Naive thymus-derived CD4-positive, alpha-beta T cell (primary cell): ENCODE measurements at regions of chr2 and their contacts with region 1.

Region 1: DNA sequence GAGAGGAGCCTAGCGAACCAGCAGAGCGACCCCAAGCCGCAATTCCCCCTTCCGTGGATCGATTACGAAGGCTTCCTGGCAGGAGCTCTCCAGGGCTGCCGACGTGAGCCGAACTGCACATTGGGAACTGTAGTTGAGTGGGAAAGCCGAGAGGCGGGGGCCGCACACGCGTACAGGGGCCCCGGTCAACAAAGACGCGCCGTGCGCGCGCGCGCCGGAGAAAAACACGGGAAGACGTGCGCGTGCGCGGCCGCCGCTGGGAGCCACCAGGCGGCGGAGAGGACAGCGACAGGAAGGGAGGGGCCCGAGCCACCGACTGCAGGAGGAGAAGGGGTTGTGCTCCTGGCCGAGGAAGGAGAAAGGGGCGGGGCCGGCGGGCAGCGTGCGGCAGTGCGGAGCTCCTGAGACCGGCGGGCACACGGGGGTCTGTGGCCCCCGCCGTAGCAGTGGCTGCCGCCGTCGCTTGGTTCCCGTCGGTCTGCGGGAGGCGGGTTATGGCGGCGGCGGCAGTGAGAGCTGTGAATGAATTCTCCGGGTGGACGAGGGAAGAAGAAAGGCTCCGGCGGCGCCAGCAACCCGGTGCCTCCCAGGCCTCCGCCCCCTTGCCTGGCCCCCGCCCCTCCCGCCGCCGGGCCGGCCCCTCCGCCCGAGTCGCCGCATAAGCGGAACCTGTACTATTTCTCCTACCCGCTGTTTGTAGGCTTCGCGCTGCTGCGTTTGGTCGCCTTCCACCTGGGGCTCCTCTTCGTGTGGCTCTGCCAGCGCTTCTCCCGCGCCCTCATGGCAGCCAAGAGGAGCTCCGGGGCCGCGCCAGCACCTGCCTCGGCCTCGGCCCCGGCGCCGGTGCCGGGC is at the start of gene SPAST:
- DNase-seq: peak; percentile 92 to 97 (median 95)
- ATAC-seq: peak; percentile 93
- H3K4me3 ChIP-seq: peak within 1 kb of the TSS; percentile 99
- H3K4me3 Mint-ChIP-seq: peak within 1 kb of the TSS; percentile 91 to 100 (median 98)
- H3K27ac ChIP-seq: peak within 1 kb of the TSS; percentile 88
- H3K27ac Mint-ChIP-seq: peak within 1 kb of the TSS; percentile 88 to 97 (median 92)
- H3K4me1 ChIP-seq: peaks cover 5 to 15% of the 10 kb centered on the region in 2 donors
- H3K4me1 Mint-ChIP-seq: peaks cover 22 to 46% (median 37%) of the 10 kb centered on the region in 7 donors
- H3K27me3 ChIP-seq: no peaks in the 10 kb centered on the region
- H3K27me3 Mint-ChIP-seq: peaks cover 0 to 1% (median 0%) of the 10 kb centered on the region in 5 donors
- total RNA-seq, gene SPAST: 16.3 to 21.0 (median 20.3) TPM

Region 2: GRCh38 chr2:32039447-32040219 is 23.9 kb before region 1 on chr2 and contains the start of gene DPY30:
- CTCF ChIA-PET with region 1: interaction called, 5 read pairs
- POLR2A ChIA-PET with region 1: interaction called, 82 read pairs
- intact Hi-C with region 1: loop called (anchors 1 kb)
- DNase-seq: peak; percentile 86 to 94 (median 90)
- ATAC-seq: peak; percentile 98
- H3K4me3 ChIP-seq: peak within 1 kb of the TSS; percentile 64
- H3K4me3 Mint-ChIP-seq: peak within 1 kb of the TSS; percentile 88 to 98 (median 93)
- H3K27ac ChIP-seq: peak within 1 kb of the TSS; percentile 78
- H3K27ac Mint-ChIP-seq: peak within 1 kb of the TSS; percentile 91 to 99 (median 96)
- H3K4me1 ChIP-seq: peaks cover 5 to 6% of the 10 kb centered on the region in 2 donors
- H3K4me1 Mint-ChIP-seq: peaks cover 0 to 32% (median 24%) of the 10 kb centered on the region in 7 donors
- H3K27me3 ChIP-seq: no peaks in the 10 kb centered on the region
- H3K27me3 Mint-ChIP-seq: no peaks in the 10 kb centered on the region
- total RNA-seq, gene DPY30: 21.4 to 61.9 (median 45.6) TPM

Region 3: GRCh38 chr2:32135409-32135808 is 71.9 kb after region 1 on chr2:
- CTCF ChIA-PET with region 1: no interaction called
- POLR2A ChIA-PET with region 1: no interaction called
- intact Hi-C with region 1: loop called (anchors 1 to 5 kb)
- DNase-seq: peak in 5 of 9 donors; percentile 4 to 31 (median 17)
- ATAC-seq: no peak
- H3K4me3 ChIP-seq: no peak overlapping the region
- H3K4me3 Mint-ChIP-seq: no peak overlapping the region
- H3K27ac ChIP-seq: no peak overlapping the region
- H3K27ac Mint-ChIP-seq: no peak overlapping the region
- H3K4me1 ChIP-seq: no peaks in the 10 kb centered on the region
- H3K4me1 Mint-ChIP-seq: peaks cover 0 to 4% (median 0%) of the 10 kb centered on the region in 7 donors
- H3K27me3 ChIP-seq: no peaks in the 10 kb centered on the region
- H3K27me3 Mint-ChIP-seq: no peaks in the 10 kb centered on the region

Region 4: GRCh38 chr2:32168513-32168912 is 105.0 kb after region 1 on chr2:
- CTCF ChIA-PET with region 1: no interaction called
- POLR2A ChIA-PET with region 1: interaction called, 7 read pairs
- intact Hi-C with region 1: loop called (anchors 1 kb)
- DNase-seq: no peak
- ATAC-seq: no peak
- H3K4me3 ChIP-seq: no peak overlapping the region
- H3K4me3 Mint-ChIP-seq: no peak overlapping the region
- H3K27ac ChIP-seq: no peak overlapping the region
- H3K27ac Mint-ChIP-seq: peak overlapping the region in 4 of 9 donors; percentile 2 to 25 (median 10)
- H3K4me1 ChIP-seq: no peaks in the 10 kb centered on the region
- H3K4me1 Mint-ChIP-seq: peaks cover 17 to 61% (median 49%) of the 10 kb centered on the region in 7 donors
- H3K27me3 ChIP-seq: no peaks in the 10 kb centered on the region
- H3K27me3 Mint-ChIP-seq: no peaks in the 10 kb centered on the region

Region 5: GRCh38 chr2:32277674-32278482 is 214.3 kb after region 1 on chr2 and contains the start of gene YIPF4:
- CTCF ChIA-PET with region 1: no interaction called
- POLR2A ChIA-PET with region 1: no interaction called
- intact Hi-C with region 1: loop called (anchors 1 kb)
- DNase-seq: peak; percentile 84 to 92 (median 88)
- ATAC-seq: peak; percentile 99
- H3K4me3 ChIP-seq: peak within 1 kb of the TSS; percentile 67
- H3K4me3 Mint-ChIP-seq: peak within 1 kb of the TSS; percentile 82 to 100 (median 94)
- H3K27ac ChIP-seq: peak within 1 kb of the TSS; percentile 84
- H3K27ac Mint-ChIP-seq: peak within 1 kb of the TSS; percentile 91 to 100 (median 98)
- H3K4me1 ChIP-seq: peaks cover under 1 to 6% of the 10 kb centered on the region in 2 donors
- H3K4me1 Mint-ChIP-seq: peaks cover 10 to 46% (median 33%) of the 10 kb centered on the region in 7 donors
- H3K27me3 ChIP-seq: no peaks in the 10 kb centered on the region
- H3K27me3 Mint-ChIP-seq: peaks cover 0 to 6% (median 0%) of the 10 kb centered on the region in 5 donors
- total RNA-seq, gene YIPF4: 21.0 to 43.5 (median 30.5) TPM